ENCODE measurements at regions of chr20 and their contacts with region 1.

Region 1: GRCh38 chr20:57234556-57235251 is 31.7 kb downstream of the BMP7 start:
- DNase-seq: no peak
- H3K4me3 ChIP-seq: no peak overlapping the region
- H3K27ac ChIP-seq: no peak overlapping the region
- H3K4me1 ChIP-seq: peaks cover 4 to 14% (median 8%) of the 10 kb centered on the region in 4 experiments
- H3K27me3 ChIP-seq: peaks cover 4 to 47% (median 18%) of the 10 kb centered on the region in 4 experiments; a peak in 6 of 7 replicates
- CTCF ChIP-seq: no peak
- EP300 ChIP-seq: no peak
- POLR2A ChIP-seq: no peak
- RAD21 ChIP-seq: no peak

Region 2: DNA sequence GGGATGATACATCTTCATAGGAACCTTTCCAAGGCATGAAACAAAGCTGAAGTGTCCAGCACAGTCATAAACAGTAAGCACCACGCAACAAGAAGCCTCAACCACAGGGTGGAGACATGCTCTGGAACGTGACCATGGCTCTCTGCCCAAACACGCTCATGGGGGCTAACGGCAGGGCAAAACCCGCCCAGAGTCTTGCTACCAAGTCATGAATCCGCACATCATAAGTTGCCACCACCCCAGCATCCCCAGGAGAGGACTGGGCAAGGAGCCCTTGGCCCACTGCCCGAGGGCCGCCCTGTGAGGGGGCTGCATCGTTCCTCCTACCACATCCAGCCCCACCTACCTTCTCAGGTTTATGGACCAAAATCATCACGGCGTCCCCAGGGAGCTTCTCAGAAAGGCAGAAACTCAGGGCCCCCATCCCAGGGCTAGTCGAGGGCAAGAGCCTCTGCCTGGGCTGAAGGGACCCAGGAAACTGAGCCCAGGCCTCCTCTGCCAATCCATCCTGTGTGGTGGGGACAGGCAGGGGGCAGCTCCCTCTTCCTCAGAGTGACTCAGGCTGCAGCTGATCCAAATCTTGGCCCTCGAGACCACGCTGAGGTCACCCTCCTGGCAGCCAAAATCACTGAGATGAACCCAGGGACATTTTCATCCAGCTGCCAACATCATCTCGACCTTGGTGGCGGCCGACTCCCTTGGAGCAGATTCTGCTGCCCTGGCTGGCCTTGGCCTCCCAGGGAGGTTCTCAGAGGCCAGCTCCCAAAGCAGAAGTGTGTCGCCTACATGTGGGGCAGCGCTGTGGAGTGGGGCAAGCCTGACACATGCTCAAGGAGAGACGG is 10.8 kb before region 1 on chr20:
- CTCF ChIA-PET with region 1: interaction called, 11 read pairs
- POLR2A ChIA-PET with region 1: interaction called, 3 read pairs
- DNase-seq: no peak
- H3K4me3 ChIP-seq: no peak overlapping the region
- H3K27ac ChIP-seq: no peak overlapping the region
- H3K4me1 ChIP-seq: no peaks in the 10 kb centered on the region; a peak in 1 of 7 replicates
- H3K27me3 ChIP-seq: no peaks in the 10 kb centered on the region; a peak in 1 of 7 replicates
- CTCF ChIP-seq: peak in 2 of 3 experiments; percentile 19 to 21; a peak in 2 of 4 replicates
- EP300 ChIP-seq: no peak
- POLR2A ChIP-seq: no peak
- RAD21 ChIP-seq: peak; percentile 20 to 36; a peak in 3 of 4 replicates